Lower leg skin (tissue), 4 donors: ENCODE measurements at regions of chr22 and their contacts with region 1.

Region 1: GRCh38 chr22:32082331-32082730 is 39.3 kb downstream of the SLC5A1 start:
- DNase-seq: no peak
- H3K4me3 ChIP-seq: no peak overlapping the region
- CTCF ChIP-seq: no peak
- POLR2A ChIP-seq: no peak

Region 2: DNA sequence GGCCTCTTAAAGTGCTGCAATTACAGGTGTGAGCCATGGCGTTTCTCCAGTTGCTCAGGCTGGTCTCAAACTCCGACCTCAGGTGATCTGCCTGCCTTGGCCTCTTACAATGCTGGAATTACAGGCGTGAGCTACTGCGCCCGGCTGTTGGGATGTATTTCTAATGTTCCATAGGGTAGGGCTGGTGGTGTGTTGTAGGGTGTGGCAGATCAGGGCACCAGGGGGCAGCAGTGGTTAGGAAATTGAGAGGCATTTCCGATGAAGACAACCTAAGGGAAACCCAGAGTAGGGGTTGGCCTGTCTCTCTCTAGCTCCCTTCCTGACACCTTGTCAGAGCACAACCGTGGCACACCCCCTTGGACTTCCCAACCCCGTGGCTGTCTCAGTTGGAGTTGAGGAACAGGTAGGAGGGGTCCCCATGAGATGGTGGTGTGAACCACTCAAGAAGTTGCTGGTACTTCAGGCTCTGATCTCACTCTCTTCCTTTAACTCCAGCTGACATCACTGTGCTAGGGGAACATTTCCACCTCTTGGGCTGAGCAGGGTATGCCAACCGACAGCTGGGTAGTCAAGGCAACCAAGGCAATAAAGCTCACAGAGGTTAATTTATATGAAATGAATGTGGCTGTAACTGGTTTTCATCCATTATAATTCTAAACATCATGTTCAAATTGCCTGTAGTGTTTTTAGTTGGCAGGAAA is 105.0 kb before region 1 on chr22:
- intact Hi-C with region 1: loop called (anchors 2 kb)
- DNase-seq: peak; percentile 70 to 93
- H3K4me3 ChIP-seq: no peak overlapping the region
- CTCF ChIP-seq: peak in 1 of 3 donors; percentile 58
- POLR2A ChIP-seq: no peak